CD4-positive, alpha-beta memory T cell (primary cell): ENCODE measurements at regions of chr11 and their contacts with region 1.

Region 1: GRCh38 chr11:68271781-68272608 is at the start of gene C11orf24:
- DNase-seq: peak; percentile 91 to 95 (median 91)
- H3K4me3 ChIP-seq: peak within 1 kb of the TSS; percentile 78 to 79
- H3K4me3 Mint-ChIP-seq: peak within 1 kb of the TSS; percentile 90 to 98 (median 96)
- H3K27ac ChIP-seq: peak within 1 kb of the TSS; percentile 89
- H3K27ac Mint-ChIP-seq: peak within 1 kb of the TSS; percentile 94 to 99 (median 98)
- H3K4me1 ChIP-seq: peaks cover 20% of the 10 kb centered on the region
- H3K4me1 Mint-ChIP-seq: peaks cover 16 to 46% (median 31%) of the 10 kb centered on the region in 4 donors
- H3K27me3 ChIP-seq: no peaks in the 10 kb centered on the region
- H3K27me3 Mint-ChIP-seq: no peaks in the 10 kb centered on the region
- total RNA-seq, gene C11orf24: 19.1 to 20.3 TPM

Region 2: DNA sequence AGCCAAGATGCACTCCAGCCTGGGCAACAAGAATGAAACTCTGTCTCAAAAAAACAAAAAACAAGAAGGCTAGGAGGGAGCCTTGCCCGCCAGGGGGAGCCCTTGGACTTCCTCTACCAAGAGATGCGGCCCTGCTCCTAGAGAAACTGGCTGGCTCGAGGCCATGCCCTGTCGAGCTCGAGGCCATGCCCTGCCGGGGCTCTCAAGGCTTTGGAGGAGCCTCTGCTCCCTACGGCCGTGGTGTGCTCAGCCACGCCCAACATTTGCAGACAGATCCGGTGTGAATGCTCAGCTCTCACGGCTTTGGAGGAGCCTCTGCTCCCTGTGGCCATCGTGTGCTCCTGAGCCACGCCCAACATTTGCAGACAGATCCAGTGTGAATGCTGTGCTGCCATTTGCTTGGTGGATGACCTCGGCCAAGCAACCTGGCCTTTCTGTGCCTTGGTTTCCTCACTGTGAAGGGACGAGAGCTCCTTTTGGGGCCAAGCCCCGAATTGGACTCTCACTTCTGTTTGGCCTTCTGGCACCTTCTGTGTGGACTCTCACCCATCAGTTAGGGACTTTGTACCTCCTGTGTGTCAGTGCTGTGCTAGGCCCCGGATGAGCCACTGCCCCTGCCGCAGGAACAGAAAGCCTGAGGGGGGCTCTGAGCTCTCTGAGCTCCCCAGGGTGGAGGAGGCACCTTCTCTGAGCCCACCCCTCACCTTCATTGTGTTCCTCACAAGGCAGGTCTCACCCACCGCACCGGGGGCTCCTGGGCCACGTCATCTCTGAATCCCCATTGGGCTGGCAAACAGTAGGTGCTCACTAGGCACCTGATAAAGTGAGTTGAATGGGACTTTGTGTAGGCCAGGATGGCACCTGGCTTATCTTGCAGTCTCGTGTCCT is 14.3 kb before region 1 on chr11:
- CTCF ChIA-PET with region 1: interaction called, 12 read pairs
- POLR2A ChIA-PET with region 1: interaction called, 10 read pairs
- intact Hi-C with region 1: loop called (anchors 1 kb)
- DNase-seq: peak; percentile 86 to 91 (median 87)
- H3K4me3 ChIP-seq: no peak overlapping the region
- H3K4me3 Mint-ChIP-seq: peak overlapping the region in 1 of 8 donors; percentile 51
- H3K27ac ChIP-seq: no peak overlapping the region
- H3K27ac Mint-ChIP-seq: peak overlapping the region in 4 of 7 donors; percentile 25 to 81 (median 69)
- H3K4me1 ChIP-seq: peaks cover 7% of the 10 kb centered on the region
- H3K4me1 Mint-ChIP-seq: peaks cover 2 to 12% (median 5%) of the 10 kb centered on the region in 4 donors
- H3K27me3 ChIP-seq: no peaks in the 10 kb centered on the region
- H3K27me3 Mint-ChIP-seq: no peaks in the 10 kb centered on the region

Region 3: GRCh38 chr11:68282141-68282970 is 10.4 kb after region 1 on chr11:
- CTCF ChIA-PET with region 1: no interaction called
- POLR2A ChIA-PET with region 1: interaction called, 11 read pairs
- intact Hi-C with region 1: no loop called
- DNase-seq: peak; percentile 11 to 55 (median 20)
- H3K4me3 ChIP-seq: no peak overlapping the region
- H3K4me3 Mint-ChIP-seq: peak overlapping the region; percentile 2 to 77 (median 60)
- H3K27ac ChIP-seq: no peak overlapping the region
- H3K27ac Mint-ChIP-seq: peak overlapping the region in 3 of 7 donors; percentile 20 to 80 (median 27)
- H3K4me1 ChIP-seq: peaks cover 16% of the 10 kb centered on the region
- H3K4me1 Mint-ChIP-seq: peaks cover 14 to 19% (median 18%) of the 10 kb centered on the region in 4 donors
- H3K27me3 ChIP-seq: no peaks in the 10 kb centered on the region
- H3K27me3 Mint-ChIP-seq: peaks cover 0 to 9% of the 10 kb centered on the region in 2 donors

Region 4: DNA sequence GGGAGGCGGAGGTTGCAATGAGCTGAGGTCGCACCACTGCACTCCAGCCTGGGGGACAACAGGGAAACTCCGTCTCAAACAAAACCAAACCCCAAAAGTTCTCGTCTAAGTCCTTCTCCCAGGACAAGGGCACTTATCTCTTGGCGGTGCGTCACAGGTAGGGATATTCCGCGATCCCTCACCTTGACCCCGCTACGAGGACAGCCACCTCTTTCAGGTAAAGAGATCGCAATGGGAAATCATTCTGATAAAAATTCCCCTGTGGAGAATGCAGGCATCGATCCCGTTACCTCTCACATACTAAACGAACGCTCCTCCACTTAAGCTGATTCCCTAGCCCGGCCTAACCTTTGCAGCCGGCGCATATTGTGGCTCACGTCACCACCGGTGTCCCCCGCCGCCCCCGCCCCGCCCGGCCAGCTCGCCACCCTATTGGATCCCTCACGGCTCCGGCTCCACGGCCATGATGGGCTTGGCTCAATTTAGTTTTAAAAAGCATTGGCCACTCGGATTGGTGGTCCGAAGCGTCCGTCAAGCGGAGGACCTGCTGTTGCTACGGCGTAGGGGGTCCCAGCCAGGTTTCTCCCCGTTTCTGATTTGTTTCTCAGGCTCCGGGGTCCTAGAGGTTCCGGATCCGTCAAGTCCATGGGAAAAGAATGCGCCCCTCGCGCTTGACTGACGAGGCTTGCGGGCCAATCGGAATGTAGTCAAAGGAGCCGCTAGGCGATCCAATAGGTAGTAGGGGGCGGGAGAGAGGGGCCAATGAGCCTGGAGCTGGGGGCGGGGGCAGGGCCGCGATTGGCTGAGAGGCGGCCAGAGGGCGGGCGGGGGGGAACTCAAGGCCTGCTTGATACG is 188.1 kb after region 1 on chr11:
- CTCF ChIA-PET with region 1: no interaction called
- POLR2A ChIA-PET with region 1: interaction called, 4 read pairs
- intact Hi-C with region 1: loop called (anchors 5 kb)
- DNase-seq: peak; percentile 95 to 97 (median 96)
- H3K4me3 ChIP-seq: peak overlapping the region; percentile 75 to 90
- H3K4me3 Mint-ChIP-seq: peak overlapping the region; percentile 93 to 99 (median 95)
- H3K27ac ChIP-seq: peak overlapping the region; percentile 93
- H3K27ac Mint-ChIP-seq: peak overlapping the region; percentile 98 to 100 (median 99)
- H3K4me1 ChIP-seq: peaks cover 44% of the 10 kb centered on the region
- H3K4me1 Mint-ChIP-seq: peaks cover 22 to 44% (median 32%) of the 10 kb centered on the region in 4 donors
- H3K27me3 ChIP-seq: no peaks in the 10 kb centered on the region
- H3K27me3 Mint-ChIP-seq: peaks cover 0 to 6% of the 10 kb centered on the region in 2 donors